ENCODE measurements at regions of chr11 and their contacts with region 1.

Region 1: DNA sequence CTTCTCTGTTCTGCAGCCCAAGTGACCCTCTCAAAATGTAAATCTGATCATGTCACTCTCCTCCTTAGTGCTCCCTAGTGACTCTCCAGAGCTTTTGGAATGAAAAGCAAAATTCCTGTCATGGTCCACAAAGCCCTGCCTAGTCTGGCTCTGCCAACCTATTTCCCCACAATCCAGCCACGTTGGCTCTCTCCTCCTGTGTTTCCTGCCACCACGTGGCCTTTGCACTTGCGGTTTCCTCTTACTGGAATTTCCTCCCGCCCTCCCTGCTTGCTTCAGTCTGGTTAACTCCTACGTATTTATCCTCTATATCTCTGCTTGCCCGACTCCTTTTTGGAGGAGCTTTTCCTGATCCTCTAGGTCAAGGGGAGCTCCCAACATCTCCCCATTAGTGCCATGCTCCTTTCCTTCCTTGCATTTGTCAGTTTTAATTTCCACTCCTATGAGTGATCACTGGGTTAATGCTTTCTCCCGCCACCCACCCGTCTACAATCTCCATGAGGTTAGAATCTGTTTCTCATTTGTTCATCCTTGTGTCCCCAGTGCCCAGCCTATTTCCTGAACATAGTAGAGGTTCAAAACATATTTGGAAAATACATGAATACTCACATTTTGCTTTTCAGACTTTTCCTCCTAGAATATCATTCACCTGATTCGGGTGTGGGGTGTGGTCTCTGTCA is 11.5 kb downstream of the NNMT start:
- DNase-seq: no peak
- H3K4me3 ChIP-seq: no peak overlapping the region
- H3K27ac ChIP-seq: peak overlapping the region; percentile 33
- H3K27me3 ChIP-seq: no peaks in the 10 kb centered on the region
- CTCF ChIP-seq: no peak

Region 2: DNA sequence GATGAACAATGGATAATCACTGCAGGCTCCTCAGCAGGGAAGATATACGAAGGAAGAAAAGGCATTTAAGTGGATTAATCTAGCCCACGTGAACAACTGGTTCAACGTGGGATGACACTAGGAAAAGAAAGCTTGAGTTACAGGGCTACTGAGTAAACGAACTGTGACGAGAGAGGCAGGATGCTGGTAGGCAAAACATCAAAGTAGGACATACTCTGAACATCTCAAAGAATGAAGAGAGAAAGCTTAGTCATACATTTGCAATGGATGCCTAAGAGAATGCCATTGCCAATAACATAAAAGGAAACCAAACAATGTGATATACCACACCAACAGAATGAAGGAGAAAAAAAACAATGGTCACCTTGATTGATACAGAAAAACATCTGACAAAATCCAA is 445.2 kb before region 1 on chr11:
- CTCF ChIA-PET with region 1: no interaction called
- POLR2A ChIA-PET with region 1: no interaction called
- DNase-seq: no peak
- H3K4me3 ChIP-seq: no peak overlapping the region
- H3K27ac ChIP-seq: no peak overlapping the region
- H3K27me3 ChIP-seq: no peaks in the 10 kb centered on the region
- CTCF ChIP-seq: no peak

Region 3: DNA sequence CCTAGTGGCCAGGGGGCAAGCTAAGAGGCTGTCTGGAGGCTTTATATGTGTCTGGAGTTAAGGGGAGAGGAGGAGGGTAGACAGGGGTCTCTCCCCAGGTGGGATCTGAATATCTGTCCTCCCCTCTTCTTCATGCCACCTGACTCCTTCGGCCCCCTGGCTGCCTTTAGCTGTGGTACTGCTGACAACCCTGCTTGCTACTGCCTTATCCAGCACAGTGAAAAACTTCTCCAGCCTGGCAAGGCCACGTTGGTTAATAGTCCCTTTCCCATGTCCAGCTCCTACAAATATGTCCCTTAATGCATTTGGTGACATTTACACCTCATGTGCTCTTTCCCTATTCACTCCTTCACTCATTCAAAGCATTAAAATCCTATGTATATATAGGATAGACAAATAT is 53.9 kb before region 1 on chr11:
- CTCF ChIA-PET with region 1: no interaction called
- POLR2A ChIA-PET with region 1: no interaction called
- DNase-seq: no peak
- H3K4me3 ChIP-seq: no peak overlapping the region
- H3K27ac ChIP-seq: no peak overlapping the region
- H3K27me3 ChIP-seq: peaks cover 13% of the 10 kb centered on the region
- CTCF ChIP-seq: no peak

Region 4: GRCh38 chr11:114295676-114296604 is 11.7 kb before region 1 on chr11 and contains the start of gene NNMT:
- CTCF ChIA-PET with region 1: interaction called, 3 read pairs
- POLR2A ChIA-PET with region 1: interaction called, 11 read pairs
- DNase-seq: peak; percentile 92
- H3K4me3 ChIP-seq: peak within 1 kb of the TSS; percentile 67
- H3K27ac ChIP-seq: peak within 1 kb of the TSS; percentile 99
- H3K27me3 ChIP-seq: no peaks in the 10 kb centered on the region
- CTCF ChIP-seq: peak; percentile 11; the same call in 1 of the 2 replicates
- polyA plus RNA-seq, gene NNMT: 188 and 217 TPM in 2 replicates

Region 5: DNA sequence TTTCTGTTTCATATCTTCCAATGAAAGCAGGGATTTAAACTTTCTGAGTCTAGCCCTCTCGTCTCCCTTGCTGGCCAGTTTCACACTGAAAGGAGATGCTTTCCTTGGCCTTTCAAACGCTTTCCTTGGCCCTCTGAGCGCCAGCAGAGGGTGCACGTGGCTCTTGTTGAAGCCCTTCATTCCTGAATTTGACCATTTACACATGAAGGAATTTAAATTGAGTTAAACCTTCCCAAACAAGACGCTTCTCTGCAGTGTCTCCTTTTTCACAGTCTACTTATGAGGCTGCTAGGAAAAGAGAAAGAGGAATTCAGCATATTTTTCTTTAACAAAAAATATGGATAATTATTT is 10.1 kb after region 1 on chr11:
- CTCF ChIA-PET with region 1: interaction called, 10 read pairs
- POLR2A ChIA-PET with region 1: interaction called, 4 read pairs
- DNase-seq: peak; percentile 24
- H3K4me3 ChIP-seq: no peak overlapping the region
- H3K27ac ChIP-seq: peak overlapping the region; percentile 39
- H3K27me3 ChIP-seq: no peaks in the 10 kb centered on the region
- CTCF ChIP-seq: peak; percentile 77

Region 6: GRCh38 chr11:114416441-114416961 is 108.8 kb after region 1 on chr11:
- CTCF ChIA-PET with region 1: no interaction called
- POLR2A ChIA-PET with region 1: no interaction called
- DNase-seq: no peak
- H3K4me3 ChIP-seq: no peak overlapping the region
- H3K27ac ChIP-seq: no peak overlapping the region
- H3K27me3 ChIP-seq: no peaks in the 10 kb centered on the region
- CTCF ChIP-seq: no peak